Activated T-helper 2 cell treated with anti-CD3 and anti-CD28 coated beads, Interferon-gamma antibody, Interleukin-2, Interleukin-4, amounts not matched to agents 10 μg/mL and 5 μg/mL and 100 μg/mL, durations not matched to agents 14 hours and 24 hours and 36 hours (primary cell): ENCODE measurements at regions of chr3 and their contacts with region 1.

Region 1: GRCh38 chr3:18559331-18559842 is 134.2 kb upstream of the SATB1 start:
- DNase-seq: peak; percentile 26
- H3K4me3 Mint-ChIP-seq: peak overlapping the region; percentile 58
- H3K27ac Mint-ChIP-seq: peak overlapping the region; percentile 96
- H3K4me1 Mint-ChIP-seq: peaks cover 71% of the 10 kb centered on the region
- H3K27me3 Mint-ChIP-seq: no peaks in the 10 kb centered on the region

Region 2: GRCh38 chr3:18208856-18209255 is 350.5 kb before region 1 on chr3:
- intact Hi-C with region 1: loop called (anchors 1 kb)
- DNase-seq: no peak
- H3K4me3 Mint-ChIP-seq: no peak overlapping the region
- H3K27ac Mint-ChIP-seq: peak overlapping the region; percentile 50
- H3K4me1 Mint-ChIP-seq: peaks cover 44% of the 10 kb centered on the region
- H3K27me3 Mint-ChIP-seq: no peaks in the 10 kb centered on the region

Region 3: GRCh38 chr3:18438586-18438985 is 120.8 kb before region 1 on chr3:
- intact Hi-C with region 1: no loop called
- DNase-seq: peak; percentile 58
- H3K4me3 Mint-ChIP-seq: peak overlapping the region; percentile 87
- H3K27ac Mint-ChIP-seq: peak overlapping the region; percentile 88
- H3K4me1 Mint-ChIP-seq: peaks cover 22% of the 10 kb centered on the region
- H3K27me3 Mint-ChIP-seq: no peaks in the 10 kb centered on the region

Region 4: GRCh38 chr3:18531662-18532236 is 27.6 kb before region 1 on chr3:
- intact Hi-C with region 1: no loop called
- DNase-seq: no peak
- H3K4me3 Mint-ChIP-seq: no peak overlapping the region
- H3K27ac Mint-ChIP-seq: no peak overlapping the region
- H3K4me1 Mint-ChIP-seq: peaks cover 12% of the 10 kb centered on the region
- H3K27me3 Mint-ChIP-seq: no peaks in the 10 kb centered on the region

Region 5: DNA sequence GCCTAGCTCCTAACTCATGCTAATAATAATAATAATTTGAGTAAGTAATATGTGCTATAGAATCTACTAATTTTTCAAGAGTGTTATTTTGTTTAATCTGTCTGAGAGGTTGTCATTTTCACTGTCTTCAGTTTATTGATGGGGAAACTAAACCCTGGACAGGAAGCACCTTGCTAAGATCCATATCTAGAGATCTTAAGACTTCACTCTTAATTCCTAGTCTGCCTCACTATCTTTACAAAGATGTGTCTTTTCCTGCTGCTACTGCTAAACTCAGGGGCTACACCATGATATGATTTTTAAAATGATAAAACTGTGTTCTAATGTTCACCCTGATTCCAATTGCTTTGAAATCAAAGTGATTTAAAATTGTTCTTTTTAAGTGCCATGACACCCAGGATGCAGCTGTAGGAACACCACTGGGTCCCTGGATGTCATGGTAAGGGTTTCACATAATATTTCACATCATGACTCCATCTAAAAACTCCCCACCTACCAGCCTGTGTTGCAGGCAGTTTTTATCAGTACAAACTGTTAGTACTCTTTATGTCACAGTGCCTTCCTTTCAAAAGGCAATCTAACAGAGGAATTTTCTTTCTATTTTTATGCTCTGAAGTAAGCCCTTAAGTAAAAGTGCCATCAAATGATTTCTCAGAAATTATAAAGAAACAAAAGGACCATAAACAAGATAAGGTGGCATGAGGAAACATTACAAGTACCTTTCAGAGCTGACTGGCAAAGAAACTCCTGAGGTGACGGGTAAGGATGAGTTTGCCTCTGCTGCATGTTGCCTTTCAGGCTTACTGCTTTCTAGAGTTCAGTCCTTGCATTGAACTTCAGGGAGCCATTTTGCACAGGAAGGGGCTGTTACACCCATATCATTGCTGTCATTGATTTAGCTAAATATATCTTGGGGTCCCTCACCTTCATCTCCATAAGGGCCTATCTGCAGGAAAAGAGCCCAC is 25.9 kb after region 1 on chr3:
- intact Hi-C with region 1: loop called (anchors 1 kb)
- DNase-seq: no peak
- H3K4me3 Mint-ChIP-seq: no peak overlapping the region
- H3K27ac Mint-ChIP-seq: peak overlapping the region; percentile 77
- H3K4me1 Mint-ChIP-seq: peaks cover 19% of the 10 kb centered on the region
- H3K27me3 Mint-ChIP-seq: no peaks in the 10 kb centered on the region

Region 6: DNA sequence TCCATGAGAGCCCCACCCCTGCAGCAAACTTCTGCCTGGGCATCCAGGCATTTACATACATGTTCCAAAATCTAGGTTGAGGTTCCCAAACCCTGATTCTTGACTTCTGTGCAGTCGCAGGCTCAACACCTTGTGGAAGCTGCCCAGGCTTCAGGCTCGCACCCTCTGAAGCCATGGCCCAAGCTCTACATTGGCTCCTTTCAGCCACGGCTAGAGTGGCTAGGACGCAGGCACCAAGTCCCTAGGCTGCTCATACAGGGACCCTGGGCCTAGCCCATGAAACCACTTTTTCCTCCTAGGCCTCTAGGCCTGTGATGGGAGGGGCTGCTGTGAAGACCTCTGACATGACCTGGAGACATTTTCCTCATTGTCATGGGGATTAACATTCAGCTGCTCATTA is 38.5 kb after region 1 on chr3:
- intact Hi-C with region 1: no loop called
- DNase-seq: no peak
- H3K4me3 Mint-ChIP-seq: no peak overlapping the region
- H3K27ac Mint-ChIP-seq: no peak overlapping the region
- H3K4me1 Mint-ChIP-seq: no peaks in the 10 kb centered on the region
- H3K27me3 Mint-ChIP-seq: no peaks in the 10 kb centered on the region

Region 7: DNA sequence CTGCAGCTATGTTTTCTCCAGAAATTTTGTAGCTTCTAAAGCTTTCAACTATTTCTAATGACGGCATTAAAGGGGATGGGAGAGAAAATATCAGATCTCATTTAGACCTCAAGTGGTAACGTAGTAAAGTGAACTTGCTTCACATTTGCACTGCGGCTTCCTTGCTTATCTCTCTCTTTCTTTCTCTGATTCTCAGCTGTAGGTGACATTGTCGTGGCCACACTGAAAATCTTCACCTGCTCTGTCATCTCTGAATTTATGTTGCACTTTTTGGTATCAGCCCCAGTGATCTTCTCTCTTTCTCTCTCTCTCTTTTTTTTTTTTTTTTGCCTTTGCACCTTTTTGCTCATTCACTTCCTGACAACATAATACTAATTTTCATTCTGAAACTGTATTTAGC is 119.9 kb after region 1 on chr3:
- intact Hi-C with region 1: loop called (anchors 1 kb)
- DNase-seq: peak; percentile 55
- H3K4me3 Mint-ChIP-seq: peak overlapping the region; percentile 35
- H3K27ac Mint-ChIP-seq: peak overlapping the region; percentile 65
- H3K4me1 Mint-ChIP-seq: peaks cover 76% of the 10 kb centered on the region
- H3K27me3 Mint-ChIP-seq: no peaks in the 10 kb centered on the region

Region 8: DNA sequence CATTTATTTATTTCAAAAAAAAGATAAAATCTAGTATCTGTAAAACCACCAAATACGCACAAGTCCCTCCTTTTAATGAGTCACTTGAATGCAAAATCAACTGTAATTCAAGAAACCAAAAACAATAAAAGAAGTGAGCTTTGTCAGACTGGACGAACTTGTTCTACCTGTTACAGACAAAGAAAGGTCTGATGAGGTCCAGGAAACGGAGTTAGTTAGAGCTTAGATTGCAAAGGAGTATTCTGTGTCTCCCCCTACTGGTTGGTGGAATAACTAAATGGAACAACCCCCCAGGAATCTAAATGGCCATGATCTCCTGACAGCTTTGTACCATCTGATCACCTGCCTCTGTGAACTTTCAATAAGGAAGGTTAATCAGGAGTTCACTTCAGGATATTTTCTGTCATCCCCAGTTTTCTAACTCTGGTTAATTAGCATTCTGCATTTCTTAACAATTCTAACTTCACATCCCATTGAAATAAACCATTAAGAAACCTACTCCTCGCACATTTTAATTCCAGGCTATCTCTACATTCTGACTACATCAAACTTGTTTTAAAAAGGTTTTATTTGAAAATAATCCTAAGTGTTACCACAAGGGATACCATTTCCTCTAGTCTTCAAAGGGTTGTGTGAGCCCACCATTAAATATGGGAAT is 198.8 kb after region 1 on chr3:
- intact Hi-C with region 1: loop called (anchors 1 kb)
- DNase-seq: peak; percentile 28
- H3K4me3 Mint-ChIP-seq: no peak overlapping the region
- H3K27ac Mint-ChIP-seq: peak overlapping the region; percentile 85
- H3K4me1 Mint-ChIP-seq: peaks cover 43% of the 10 kb centered on the region
- H3K27me3 Mint-ChIP-seq: no peaks in the 10 kb centered on the region

Region 9: GRCh38 chr3:19937459-19938294 is 1378.3 kb after region 1 on chr3:
- intact Hi-C with region 1: loop called (anchors 2 kb)
- DNase-seq: no peak
- H3K4me3 Mint-ChIP-seq: no peak overlapping the region
- H3K27ac Mint-ChIP-seq: peak overlapping the region; percentile 84
- H3K4me1 Mint-ChIP-seq: peaks cover 39% of the 10 kb centered on the region
- H3K27me3 Mint-ChIP-seq: peaks cover 6% of the 10 kb centered on the region